Activated CD8-positive, alpha-beta memory T cell treated with anti-CD3 and anti-CD28 coated beads, Interleukin-2, amount 10 ng/mL, durations not matched to agents 7 days and 5 days (primary cell): ENCODE measurements at regions of chr9 and their contacts with region 1.

Region 1: GRCh38 chr9:84261082-84261746 is 79.3 kb downstream of the SLC28A3 start:
- DNase-seq: peak; percentile 64
- ATAC-seq: peak; percentile 63
- H3K4me3 Mint-ChIP-seq: no peak overlapping the region
- H3K27ac Mint-ChIP-seq: no peak overlapping the region
- H3K4me1 Mint-ChIP-seq: peaks cover 8% of the 10 kb centered on the region
- H3K27me3 Mint-ChIP-seq: peaks cover 20% of the 10 kb centered on the region

Region 2: DNA sequence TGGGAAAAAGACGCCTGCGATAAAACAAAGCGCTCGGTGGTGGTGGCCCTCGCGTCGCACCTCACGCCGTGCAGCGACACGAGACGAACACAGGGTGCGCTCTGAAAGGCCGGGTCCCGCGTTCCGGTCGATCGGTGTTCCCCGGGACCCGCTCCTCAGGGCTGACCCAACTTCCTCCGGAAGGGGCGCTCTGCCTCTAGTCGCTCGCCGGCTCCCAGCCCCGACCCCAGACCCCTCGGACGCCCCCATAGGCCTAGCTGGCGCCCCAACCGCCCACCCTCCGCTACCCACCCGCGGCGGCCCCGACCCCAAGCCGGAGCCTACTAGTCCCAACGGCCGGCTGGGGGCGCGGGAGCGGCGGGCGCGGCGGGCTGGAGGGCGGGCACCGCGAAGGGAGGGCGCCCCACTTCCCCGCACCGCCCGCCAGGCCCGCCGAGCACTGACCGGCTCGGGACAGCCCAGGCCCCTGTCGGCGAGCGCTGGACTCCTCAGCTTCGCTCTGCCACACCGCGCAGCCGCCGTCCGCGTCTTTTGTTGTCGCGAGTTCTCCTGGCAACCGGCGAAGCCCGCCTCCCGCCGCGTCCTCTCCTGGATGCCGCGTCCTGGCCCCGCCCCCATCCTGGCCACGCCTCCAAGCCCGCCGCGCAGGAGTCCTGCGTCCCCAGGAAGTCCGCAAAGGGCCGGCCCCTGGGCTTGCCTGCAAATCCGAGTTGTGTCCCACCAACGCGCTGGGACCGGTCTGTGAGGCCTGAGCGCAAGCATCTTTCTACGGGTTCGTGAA is 340.1 kb before region 1 on chr9 and contains the start of gene KIF27:
- CTCF ChIA-PET with region 1: interaction called, 10 read pairs
- DNase-seq: peak; percentile 98
- ATAC-seq: peak; percentile 92
- H3K4me3 Mint-ChIP-seq: peak within 1 kb of the TSS; percentile 78
- H3K27ac Mint-ChIP-seq: peak within 1 kb of the TSS; percentile 86
- H3K4me1 Mint-ChIP-seq: peaks cover 8% of the 10 kb centered on the region
- H3K27me3 Mint-ChIP-seq: no peaks in the 10 kb centered on the region
- total RNA-seq, gene KIF27: 2.0 to 2.2 TPM

Region 3: DNA sequence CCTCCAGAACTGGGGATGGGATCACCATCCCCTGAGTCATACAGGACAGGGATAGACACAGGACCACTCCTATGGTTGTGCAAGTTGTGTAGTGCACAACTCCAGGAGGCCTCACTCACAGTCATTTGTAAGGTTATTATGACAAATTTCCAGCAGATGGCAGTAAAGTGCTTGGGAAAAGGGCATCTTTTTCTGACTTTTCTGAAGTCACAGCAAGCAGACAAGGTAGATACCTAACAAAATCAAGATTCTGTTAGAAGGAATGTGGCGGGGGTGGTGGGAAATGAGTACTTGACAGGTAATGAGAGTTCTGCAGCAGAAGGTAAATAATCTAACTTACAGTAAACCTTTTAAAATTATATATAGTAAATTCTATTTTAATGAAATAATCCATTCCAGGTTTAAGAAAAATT is 323.3 kb before region 1 on chr9:
- CTCF ChIA-PET with region 1: interaction called, 22 read pairs
- DNase-seq: peak; percentile 50
- ATAC-seq: peak; percentile 80
- H3K4me3 Mint-ChIP-seq: no peak overlapping the region
- H3K27ac Mint-ChIP-seq: no peak overlapping the region
- H3K4me1 Mint-ChIP-seq: no peaks in the 10 kb centered on the region
- H3K27me3 Mint-ChIP-seq: no peaks in the 10 kb centered on the region

Region 4: GRCh38 chr9:84207491-84207951 is 53.7 kb before region 1 on chr9:
- CTCF ChIA-PET with region 1: no interaction called
- DNase-seq: no peak
- ATAC-seq: no peak
- H3K4me3 Mint-ChIP-seq: no peak overlapping the region
- H3K27ac Mint-ChIP-seq: no peak overlapping the region
- H3K4me1 Mint-ChIP-seq: no peaks in the 10 kb centered on the region
- H3K27me3 Mint-ChIP-seq: peaks cover 12% of the 10 kb centered on the region

Region 5: GRCh38 chr9:84271531-84271900 is 10.3 kb after region 1 on chr9:
- CTCF ChIA-PET with region 1: interaction called, 10 read pairs
- DNase-seq: peak; percentile 70
- ATAC-seq: peak; percentile 77
- H3K4me3 Mint-ChIP-seq: peak overlapping the region; percentile 59
- H3K27ac Mint-ChIP-seq: no peak overlapping the region
- H3K4me1 Mint-ChIP-seq: peaks cover 9% of the 10 kb centered on the region
- H3K27me3 Mint-ChIP-seq: peaks cover 26% of the 10 kb centered on the region

Region 6: DNA sequence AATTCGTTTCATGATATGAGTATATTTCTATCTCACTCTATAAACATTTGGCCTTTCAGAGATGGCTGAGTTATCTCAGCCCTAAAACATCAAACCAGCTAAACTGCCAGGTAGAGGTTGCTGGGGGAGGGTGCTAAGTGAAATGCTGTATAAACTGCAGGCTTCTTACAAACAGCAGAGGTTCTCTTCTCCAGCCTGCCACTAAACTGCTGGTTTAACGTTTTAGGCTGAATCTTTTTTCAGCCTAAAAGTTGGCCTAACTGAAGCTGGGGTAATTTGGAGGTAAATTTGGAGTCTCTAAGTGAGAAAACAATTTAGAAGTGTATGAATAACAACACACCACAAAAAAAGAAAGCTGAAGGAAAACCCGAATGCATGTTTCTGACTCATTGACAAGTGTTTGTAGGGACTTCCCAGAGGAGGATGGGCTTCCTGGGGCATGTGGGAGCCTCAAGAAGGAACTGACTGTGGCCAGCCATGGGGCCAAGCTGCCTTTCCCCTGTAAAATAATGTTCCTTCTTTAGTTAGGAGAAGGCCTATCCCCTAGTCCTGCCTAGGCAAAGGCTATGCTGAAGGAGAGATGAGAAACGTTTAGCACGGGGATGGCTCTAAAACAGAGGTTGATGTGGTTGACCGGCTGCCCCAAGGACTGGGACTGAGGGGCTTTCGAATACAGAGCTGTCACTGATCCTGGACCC is 35.1 kb after region 1 on chr9:
- CTCF ChIA-PET with region 1: interaction called, 14 read pairs
- DNase-seq: peak; percentile 46
- ATAC-seq: peak; percentile 52
- H3K4me3 Mint-ChIP-seq: peak overlapping the region; percentile 30
- H3K27ac Mint-ChIP-seq: peak overlapping the region; percentile 85
- H3K4me1 Mint-ChIP-seq: peaks cover 60% of the 10 kb centered on the region
- H3K27me3 Mint-ChIP-seq: no peaks in the 10 kb centered on the region

Region 7: DNA sequence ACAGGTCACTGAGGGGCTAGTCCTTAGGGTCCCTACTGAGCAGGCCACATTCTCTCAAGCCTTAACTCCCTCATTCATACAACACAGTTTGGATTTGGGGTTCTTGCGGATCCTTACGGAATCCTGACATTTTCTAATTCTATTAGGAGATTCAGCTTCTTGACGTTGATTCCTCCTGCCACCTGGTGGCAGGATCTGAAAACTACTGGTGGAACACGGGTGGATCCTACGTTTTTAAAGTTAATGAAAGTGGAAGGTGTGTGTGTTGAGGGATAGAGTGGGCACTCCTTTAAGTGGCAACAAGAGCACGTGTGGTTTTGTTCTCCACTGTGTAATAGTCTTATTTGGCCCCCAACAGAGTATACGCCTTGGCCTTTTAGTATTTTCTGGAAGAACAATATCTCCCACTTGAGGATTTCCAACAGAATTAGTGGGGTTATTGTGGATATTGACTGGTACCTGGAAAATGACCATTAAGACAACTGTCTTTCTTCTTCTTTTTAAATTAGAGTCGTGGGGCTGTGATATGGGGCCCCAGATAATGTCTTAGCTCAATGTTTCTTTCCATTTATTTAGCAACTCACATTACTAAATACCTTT is 54.2 kb after region 1 on chr9:
- CTCF ChIA-PET with region 1: interaction called, 17 read pairs
- DNase-seq: peak; percentile 64
- ATAC-seq: peak; percentile 53
- H3K4me3 Mint-ChIP-seq: no peak overlapping the region
- H3K27ac Mint-ChIP-seq: no peak overlapping the region
- H3K4me1 Mint-ChIP-seq: peaks cover 16% of the 10 kb centered on the region
- H3K27me3 Mint-ChIP-seq: no peaks in the 10 kb centered on the region

Region 8: GRCh38 chr9:84411683-84412267 is 150.6 kb after region 1 on chr9:
- CTCF ChIA-PET with region 1: no interaction called
- DNase-seq: no peak
- ATAC-seq: no peak
- H3K4me3 Mint-ChIP-seq: no peak overlapping the region
- H3K27ac Mint-ChIP-seq: no peak overlapping the region
- H3K4me1 Mint-ChIP-seq: no peaks in the 10 kb centered on the region
- H3K27me3 Mint-ChIP-seq: no peaks in the 10 kb centered on the region